ENCODE measurements at regions of chr6 and their contacts with region 1.

Region 1: DNA sequence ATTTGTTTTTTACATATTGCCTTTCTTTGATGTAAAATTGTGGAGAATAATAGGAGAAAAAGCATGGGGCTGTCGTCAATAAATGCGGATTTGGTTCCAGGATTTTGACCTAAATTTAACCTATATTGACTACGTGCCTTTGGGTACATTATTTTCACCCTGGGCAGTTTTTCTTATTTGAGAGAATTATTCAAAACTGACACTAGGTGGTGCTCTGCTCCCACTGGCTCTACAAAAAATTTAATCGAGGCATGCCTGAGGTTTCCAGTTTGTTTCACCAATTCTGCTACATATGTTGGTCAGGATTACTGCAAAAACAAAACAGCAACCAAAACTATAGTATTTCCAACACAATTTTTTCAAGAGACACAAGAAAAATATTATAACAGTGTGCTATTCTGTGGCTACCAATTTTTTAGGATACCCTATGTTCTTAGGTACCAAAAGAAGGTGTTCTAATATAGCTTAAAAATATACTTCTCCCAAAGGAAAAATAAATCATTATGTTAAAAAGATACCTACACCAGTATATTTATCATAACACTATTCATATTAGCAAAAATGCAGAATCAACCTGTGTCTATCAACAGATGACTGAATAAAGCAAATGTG is 48.6 kb upstream of the FABP7 start:
- DNase-seq: no peak
- ATAC-seq: peak; percentile 41

Region 2: DNA sequence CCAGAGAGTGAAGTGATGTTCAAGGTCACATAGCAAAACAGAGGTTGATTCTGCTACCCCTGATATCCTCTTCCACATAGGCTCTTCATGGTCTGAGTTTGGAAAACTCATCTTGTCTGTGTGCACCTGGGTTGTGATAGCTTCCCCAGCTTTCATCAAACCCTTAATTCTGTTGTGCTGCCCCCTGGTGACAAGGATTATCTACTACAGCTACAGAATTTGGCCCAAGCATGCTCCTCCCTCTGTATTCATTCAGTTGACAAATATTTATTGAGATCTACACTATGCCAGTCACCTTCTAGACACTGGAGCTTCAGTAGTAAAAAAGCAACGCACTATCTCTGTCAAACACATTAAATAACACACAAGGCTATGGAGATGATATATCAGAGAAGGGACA is 108.6 kb after region 1 on chr6:
- intact Hi-C with region 1: loop called (anchors 5 kb)
- DNase-seq: no peak
- ATAC-seq: peak; percentile 71

Region 3: DNA sequence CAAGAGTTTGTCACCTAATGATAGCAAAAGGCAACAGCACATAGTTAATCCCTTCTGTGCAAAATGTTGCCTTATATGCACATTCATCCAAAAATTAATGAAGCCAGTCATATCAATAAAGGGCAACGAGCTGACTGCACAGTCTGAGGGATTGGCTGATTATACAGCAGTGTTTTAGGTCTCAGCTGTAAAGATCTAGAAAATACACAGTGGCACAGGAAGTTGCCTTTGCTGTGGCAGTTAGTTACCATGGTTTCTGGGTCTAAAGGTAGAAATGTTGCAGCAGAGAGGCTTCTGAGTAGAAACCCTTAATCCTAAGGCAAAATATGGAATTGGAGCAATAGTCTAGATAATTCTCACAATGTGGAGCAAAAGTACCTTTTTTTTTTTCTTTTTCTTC is 147.9 kb after region 1 on chr6:
- intact Hi-C with region 1: no loop called
- DNase-seq: no peak
- ATAC-seq: no peak

Measured in sciatic nerve (tissue), 2 donors.